ENCODE measurements at regions of chr6 and their contacts with region 1.

Region 1: DNA sequence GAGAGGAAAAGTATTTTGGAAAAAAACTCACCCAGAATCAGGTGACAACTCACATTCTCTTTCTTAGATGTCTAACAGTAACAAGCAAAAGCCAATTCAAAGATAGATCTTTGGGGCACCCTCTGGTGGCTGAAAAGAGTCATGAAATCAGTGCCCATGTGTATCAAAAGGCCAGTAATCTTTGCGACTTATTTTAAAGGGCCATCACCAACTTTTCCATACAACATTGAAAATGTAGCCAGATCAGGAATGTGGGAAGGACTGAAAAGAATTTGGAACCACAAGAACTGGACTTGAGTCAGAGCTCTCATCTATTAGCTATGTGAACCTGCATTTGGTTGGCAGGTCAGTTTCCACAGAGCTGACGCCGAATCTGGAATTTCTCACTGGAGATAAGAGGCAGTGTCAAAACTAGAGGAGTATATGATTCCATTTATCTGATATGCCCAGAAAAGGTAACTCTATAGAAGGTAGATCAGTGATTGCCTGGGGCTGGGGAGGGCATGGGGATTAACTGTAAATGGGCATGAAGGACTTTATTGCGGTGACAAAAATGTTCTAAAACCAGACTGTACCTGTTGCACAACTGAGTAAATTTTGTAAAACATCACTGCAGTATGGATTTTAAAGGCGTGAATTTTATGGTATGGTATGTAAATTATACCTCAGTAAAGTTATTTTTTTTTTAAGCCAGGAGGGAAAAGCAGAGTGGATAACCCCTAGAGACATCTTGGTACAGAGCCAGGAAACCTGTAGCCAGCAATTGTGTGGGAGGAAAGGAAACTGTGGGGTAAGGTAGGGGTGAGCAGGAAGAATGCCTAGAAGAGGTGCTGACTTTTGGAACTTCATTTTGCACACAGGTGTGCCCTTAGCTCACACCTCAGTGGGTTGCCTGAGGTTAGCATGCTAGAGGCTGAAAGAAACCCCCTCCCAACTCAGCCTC is 117.1 kb upstream of the ASF1A start:
- DNase-seq: peak; percentile 56
- H3K4me3 Mint-ChIP-seq: no peak overlapping the region
- H3K27ac Mint-ChIP-seq: no peak overlapping the region
- H3K4me1 Mint-ChIP-seq: peaks cover 12% of the 10 kb centered on the region
- H3K27me3 Mint-ChIP-seq: peaks cover 2% of the 10 kb centered on the region

Region 2: GRCh38 chr6:118283766-118284165 is 493.1 kb before region 1 on chr6:
- intact Hi-C with region 1: loop called (anchors 2 kb)
- DNase-seq: no peak
- H3K4me3 Mint-ChIP-seq: no peak overlapping the region
- H3K27ac Mint-ChIP-seq: no peak overlapping the region
- H3K4me1 Mint-ChIP-seq: peaks cover 6% of the 10 kb centered on the region
- H3K27me3 Mint-ChIP-seq: peaks cover 26% of the 10 kb centered on the region

Region 3: GRCh38 chr6:118565311-118565960 is 211.4 kb before region 1 on chr6:
- intact Hi-C with region 1: loop called (anchors 1 kb)
- DNase-seq: no peak
- H3K4me3 Mint-ChIP-seq: no peak overlapping the region
- H3K27ac Mint-ChIP-seq: no peak overlapping the region
- H3K4me1 Mint-ChIP-seq: peaks cover 20% of the 10 kb centered on the region
- H3K27me3 Mint-ChIP-seq: no peaks in the 10 kb centered on the region

Region 4: GRCh38 chr6:118632359-118632758 is 144.5 kb before region 1 on chr6:
- intact Hi-C with region 1: loop called (anchors 5 kb)
- DNase-seq: no peak
- H3K4me3 Mint-ChIP-seq: no peak overlapping the region
- H3K27ac Mint-ChIP-seq: peak overlapping the region; percentile 17
- H3K4me1 Mint-ChIP-seq: peaks cover 20% of the 10 kb centered on the region
- H3K27me3 Mint-ChIP-seq: no peaks in the 10 kb centered on the region

Region 5: GRCh38 chr6:118651282-118652050 is 125.4 kb before region 1 on chr6 and contains the start of gene CEP85L:
- intact Hi-C with region 1: loop called (anchors 2 kb)
- DNase-seq: peak; percentile 85
- H3K4me3 Mint-ChIP-seq: peak within 1 kb of the TSS; percentile 84
- H3K27ac Mint-ChIP-seq: peak within 1 kb of the TSS; percentile 89
- H3K4me1 Mint-ChIP-seq: peaks cover 36% of the 10 kb centered on the region
- H3K27me3 Mint-ChIP-seq: no peaks in the 10 kb centered on the region
- total RNA-seq, gene CEP85L: 34.2 and 36.7 TPM in 2 replicates